ENCODE measurements at regions of chr7 and their contacts with region 1.

Region 1: DNA sequence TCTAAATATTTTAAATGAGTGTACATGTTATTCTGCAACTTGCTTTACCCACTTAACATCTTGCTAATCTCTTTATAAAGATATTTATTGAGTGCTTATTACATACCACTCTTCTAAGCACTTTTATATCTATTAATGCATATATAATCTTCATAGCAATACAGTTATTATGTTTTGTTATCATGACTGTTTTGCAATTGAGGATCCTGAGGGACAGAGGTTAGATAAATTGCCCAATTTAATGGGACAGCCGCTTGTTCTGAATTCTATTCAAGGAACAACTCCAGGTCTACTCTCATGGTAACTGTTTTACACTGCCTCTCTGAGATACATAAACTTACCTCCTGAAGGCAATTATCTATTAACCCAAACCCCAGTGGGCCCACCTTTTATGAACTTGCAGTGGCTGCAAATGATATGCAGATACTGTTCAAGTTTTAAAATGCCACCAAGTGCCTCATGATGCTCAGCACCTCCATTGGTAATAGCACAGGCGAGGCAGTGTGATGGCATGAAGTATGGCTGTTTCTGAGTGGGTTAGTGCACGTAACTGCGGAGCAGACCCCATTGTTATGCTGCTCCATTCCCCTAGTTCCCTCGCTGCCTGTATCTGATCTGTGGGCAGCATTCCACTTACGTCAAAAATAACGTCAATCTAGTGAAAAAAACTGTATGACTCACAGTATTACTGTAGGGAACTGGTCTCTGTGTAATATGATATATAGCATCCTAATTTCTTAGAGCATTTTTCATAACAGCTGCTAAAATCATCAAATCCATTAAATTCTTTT is 60.4 kb downstream of the PON1 start:
- DNase-seq: no peak
- ATAC-seq: no peak
- H3K4me3 ChIP-seq: no peak overlapping the region
- H3K27ac ChIP-seq: no peak overlapping the region
- H3K4me1 ChIP-seq: no peaks in the 10 kb centered on the region
- H3K27me3 ChIP-seq: no peaks in the 10 kb centered on the region
- CTCF ChIP-seq: no peak

Region 2: GRCh38 chr7:94779070-94779469 is 484.9 kb before region 1 on chr7:
- CTCF ChIA-PET with region 1: no interaction called
- POLR2A ChIA-PET with region 1: no interaction called
- in situ Hi-C with region 1: no loop called
- intact Hi-C with region 1: no loop called
- DNase-seq: no peak
- ATAC-seq: no peak
- H3K4me3 ChIP-seq: no peak overlapping the region
- H3K27ac ChIP-seq: no peak overlapping the region
- H3K4me1 ChIP-seq: no peaks in the 10 kb centered on the region
- H3K27me3 ChIP-seq: no peaks in the 10 kb centered on the region
- CTCF ChIP-seq: no peak

Region 3: DNA sequence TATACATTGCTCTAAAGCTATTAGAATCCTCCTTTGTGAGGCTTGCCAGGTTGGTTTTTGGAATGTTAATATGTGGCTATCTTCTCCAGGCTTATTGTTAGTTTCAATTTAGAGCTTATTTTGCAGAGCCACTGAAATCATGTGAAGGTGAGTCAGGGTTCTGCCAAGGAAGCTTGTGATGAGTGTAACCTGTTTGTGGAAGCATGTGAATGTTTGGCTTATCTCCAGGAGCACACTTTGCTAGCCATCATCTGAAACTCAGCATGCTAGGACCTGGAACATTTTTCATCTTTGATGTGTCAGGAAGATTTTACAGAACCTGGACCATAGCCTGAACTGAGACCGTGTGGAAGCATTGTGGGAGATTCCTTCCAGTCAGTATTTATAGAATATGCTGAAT is 159.2 kb before region 1 on chr7:
- CTCF ChIA-PET with region 1: no interaction called
- POLR2A ChIA-PET with region 1: no interaction called
- in situ Hi-C with region 1: no loop called
- intact Hi-C with region 1: no loop called
- DNase-seq: peak; percentile 87
- ATAC-seq: no peak
- H3K4me3 ChIP-seq: no peak overlapping the region
- H3K27ac ChIP-seq: no peak overlapping the region
- H3K4me1 ChIP-seq: no peaks in the 10 kb centered on the region
- H3K27me3 ChIP-seq: no peaks in the 10 kb centered on the region
- CTCF ChIP-seq: no peak

Region 4: GRCh38 chr7:95427166-95427565 is 163.2 kb after region 1 on chr7:
- CTCF ChIA-PET with region 1: no interaction called
- POLR2A ChIA-PET with region 1: interaction called, 11 read pairs
- in situ Hi-C with region 1: no loop called
- intact Hi-C with region 1: no loop called
- DNase-seq: no peak
- ATAC-seq: no peak
- H3K4me3 ChIP-seq: no peak overlapping the region
- H3K27ac ChIP-seq: no peak overlapping the region
- H3K4me1 ChIP-seq: no peaks in the 10 kb centered on the region
- H3K27me3 ChIP-seq: no peaks in the 10 kb centered on the region
- CTCF ChIP-seq: no peak

Region 5: DNA sequence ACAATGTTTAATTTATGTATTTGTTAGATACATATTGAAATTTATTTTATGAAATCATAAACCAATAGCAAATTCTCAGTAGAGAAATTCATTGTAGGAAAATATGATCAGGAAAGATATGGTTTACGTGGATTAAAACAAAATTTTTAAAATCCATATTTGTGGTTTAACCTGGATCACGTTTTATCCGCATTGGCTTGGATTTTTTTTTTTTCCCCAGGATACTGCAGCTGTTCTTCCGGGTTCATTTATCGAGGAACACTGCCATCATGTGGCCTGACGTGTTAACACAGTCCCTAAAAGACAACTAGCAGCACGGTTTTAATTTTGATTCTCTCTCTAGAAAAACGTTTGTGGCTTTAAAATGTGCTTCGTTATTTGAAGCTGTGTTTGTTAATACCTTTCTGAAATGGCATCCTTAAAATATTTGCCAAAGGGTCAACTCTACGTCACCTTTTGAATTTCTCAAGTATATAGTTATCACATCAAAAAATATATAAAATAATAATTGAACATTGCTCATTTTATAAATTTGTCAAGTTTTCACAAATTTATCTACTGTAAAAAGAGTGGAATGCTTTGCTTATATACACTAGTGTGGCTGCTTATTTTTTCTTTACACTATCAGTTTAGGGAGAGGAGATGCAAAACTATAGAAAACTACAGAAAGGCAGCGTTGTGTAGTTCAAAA is 213.1 kb after region 1 on chr7:
- CTCF ChIA-PET with region 1: no interaction called
- POLR2A ChIA-PET with region 1: no interaction called
- in situ Hi-C with region 1: no loop called
- intact Hi-C with region 1: loop called (anchors 10 kb)
- DNase-seq: no peak
- ATAC-seq: peak; percentile 71; the same call in 1 of the 2 replicates
- H3K4me3 ChIP-seq: no peak overlapping the region
- H3K27ac ChIP-seq: no peak overlapping the region
- H3K4me1 ChIP-seq: no peaks in the 10 kb centered on the region
- H3K27me3 ChIP-seq: no peaks in the 10 kb centered on the region
- CTCF ChIP-seq: peak; percentile 76

Region 6: GRCh38 chr7:95596198-95597063 is 332.5 kb after region 1 on chr7 and contains the start of gene PDK4:
- CTCF ChIA-PET with region 1: no interaction called
- POLR2A ChIA-PET with region 1: no interaction called
- in situ Hi-C with region 1: no loop called
- intact Hi-C with region 1: no loop called
- DNase-seq: peak; percentile 35
- ATAC-seq: peak; percentile 97
- H3K4me3 ChIP-seq: peak within 1 kb of the TSS; percentile 55 to 69
- H3K27ac ChIP-seq: no peak within 1 kb of the TSS
- H3K4me1 ChIP-seq: peaks cover 3% of the 10 kb centered on the region; the same call in 1 of the 2 replicates
- H3K27me3 ChIP-seq: peaks cover 5% of the 10 kb centered on the region; the same call in 1 of the 2 replicates
- CTCF ChIP-seq: no peak
- total RNA-seq, gene PDK4: 1.4 TPM